GM12878 (cell line): ENCODE measurements at regions of chr3 and their contacts with region 1.

Region 1: DNA sequence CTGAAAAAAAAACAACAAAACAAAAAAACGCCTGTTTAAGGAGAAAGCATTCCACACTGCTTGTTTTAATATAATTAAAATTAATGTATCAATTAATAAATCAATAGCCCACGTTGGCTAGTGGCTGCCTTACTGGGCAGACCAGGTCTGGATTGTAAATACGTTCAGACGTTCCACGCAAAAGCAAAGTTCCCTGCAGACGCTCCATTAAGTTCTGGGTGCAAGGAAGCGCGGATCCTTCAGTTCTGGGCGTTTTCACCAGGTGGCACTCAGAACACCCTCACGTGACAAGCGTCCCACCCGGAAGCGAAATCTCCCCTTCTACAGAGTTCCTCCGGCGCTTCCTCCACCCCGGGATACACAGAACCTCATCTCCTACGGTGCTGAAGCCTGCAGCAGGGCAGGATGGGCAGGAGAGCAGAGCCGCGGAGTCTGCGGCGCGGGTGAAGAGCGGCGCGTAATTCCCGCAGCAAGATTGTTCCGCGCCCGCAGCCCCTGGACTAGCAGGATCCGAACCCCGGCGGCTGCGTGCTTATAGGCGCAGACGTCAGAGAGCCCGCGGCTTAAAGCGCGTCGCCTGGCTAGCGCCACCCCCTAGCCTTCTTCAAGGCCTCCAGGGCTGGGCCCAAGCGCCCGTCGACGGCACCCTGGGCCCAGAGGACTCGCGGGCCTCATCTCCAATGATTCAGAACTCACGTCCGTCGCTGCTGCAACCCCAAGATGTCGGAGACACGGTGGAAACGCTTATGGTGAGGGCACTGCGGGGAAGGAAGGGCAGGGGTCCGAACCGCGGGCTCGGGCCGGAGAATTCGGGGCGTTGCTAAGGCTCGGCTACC is at the start of gene SLC25A38:
- DNase-seq: no peak
- ATAC-seq: peak; percentile 84
- H3K4me3 ChIP-seq: peak within 1 kb of the TSS; percentile 89
- H3K27ac ChIP-seq: peak within 1 kb of the TSS; percentile 84
- H3K4me1 ChIP-seq: peaks cover 7% of the 10 kb centered on the region
- H3K27me3 ChIP-seq: no peaks in the 10 kb centered on the region
- CTCF ChIP-seq: peak; percentile 35 to 46 (median 36); a peak in 5 of 6 replicates
- EP300 ChIP-seq: no peak
- POLR2A ChIP-seq: peak; percentile 71
- RAD21 ChIP-seq: no peak; the same call in 1 of the 2 replicates
- polyA plus RNA-seq, gene SLC25A38: 15.2 to 21.8 TPM

Region 2: GRCh38 chr3:39406368-39407258 is 23.4 kb after region 1 on chr3 and contains the start of gene RPSA:
- CTCF ChIA-PET with region 1: interaction called, 55 read pairs
- POLR2A ChIA-PET with region 1: interaction called, 11 read pairs
- RAD21 ChIA-PET with region 1: interaction called, 24 read pairs
- SMC1A ChIA-PET with region 1: interaction called, 44 read pairs
- in situ Hi-C with region 1: no loop called
- intact Hi-C with region 1: loop called (anchors 1 kb)
- DNase-seq: peak; percentile 93
- ATAC-seq: peak; percentile 91
- H3K4me3 ChIP-seq: peak within 1 kb of the TSS; percentile 94
- H3K27ac ChIP-seq: peak within 1 kb of the TSS; percentile 83
- H3K4me1 ChIP-seq: no peaks in the 10 kb centered on the region
- H3K27me3 ChIP-seq: no peaks in the 10 kb centered on the region
- CTCF ChIP-seq: peak; percentile 42 to 55 (median 42); a peak in 5 of 6 replicates
- EP300 ChIP-seq: 0 out of 4 replicates have a peak, but pooled peaks of 1 of the 2 experiments have one; percentile 24
- POLR2A ChIP-seq: peak; percentile 100
- RAD21 ChIP-seq: peak; percentile 51
- polyA plus RNA-seq, gene RPSA: 2,843 to 4,532 TPM